Activated CD4-positive, alpha-beta T cell treated with anti-CD3 and anti-CD28 coated beads, Interleukin-2, amount 10 ng/mL, durations not matched to agents 24 days and 14 days (primary cell): ENCODE measurements at regions of chr22 and their contacts with region 1.

Region 1: DNA sequence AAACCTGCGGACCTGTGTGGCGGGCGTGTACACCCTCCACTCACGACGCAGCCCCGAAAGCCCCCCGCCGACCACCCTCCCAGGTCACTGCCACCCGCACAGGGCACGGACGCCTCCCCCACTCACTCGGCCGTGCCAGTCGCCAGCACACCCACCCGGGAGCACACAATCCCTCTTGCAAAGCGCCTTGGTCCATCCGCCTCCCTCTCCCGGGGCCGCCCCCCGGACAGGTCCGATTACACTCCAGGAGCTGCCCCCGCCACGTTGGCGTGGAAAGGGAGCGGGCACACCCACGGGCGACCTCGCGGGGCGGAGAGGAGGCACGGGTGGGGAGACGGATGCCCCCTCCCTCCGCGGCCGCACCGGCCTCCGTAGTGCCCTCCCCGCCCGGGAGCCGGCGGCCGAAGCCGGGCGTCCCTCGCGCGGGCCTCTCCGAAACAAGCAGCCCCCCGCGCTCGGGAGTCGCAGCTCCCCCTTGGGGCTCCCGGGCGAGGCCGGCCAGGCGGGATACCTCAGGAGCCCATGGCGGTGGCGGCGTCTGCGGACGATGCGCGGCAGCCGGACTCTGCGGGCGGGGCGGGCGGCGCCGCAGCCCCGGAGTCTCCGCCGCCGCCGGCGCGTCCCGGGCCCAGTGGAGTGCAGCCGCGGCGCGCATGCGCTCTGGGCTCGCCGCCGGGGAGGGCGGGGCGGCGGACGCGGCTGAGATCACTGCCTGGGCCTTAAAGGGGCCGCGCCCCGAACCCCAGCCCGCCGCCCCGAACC is at the start of gene TMEM184B:
- DNase-seq: peak; percentile 96
- H3K4me3 Mint-ChIP-seq: peak within 1 kb of the TSS; percentile 90
- H3K27ac Mint-ChIP-seq: peak within 1 kb of the TSS; percentile 89
- H3K4me1 Mint-ChIP-seq: peaks cover 34% of the 10 kb centered on the region
- H3K27me3 Mint-ChIP-seq: peaks cover 5% of the 10 kb centered on the region
- total RNA-seq, gene TMEM184B: 31.9 and 33.1 TPM in 2 replicates

Region 2: GRCh38 chr22:38317122-38317994 is 44.8 kb after region 1 on chr22 and contains the start of gene CSNK1E:
- intact Hi-C with region 1: loop called (anchors 1 kb)
- DNase-seq: peak; percentile 94
- H3K4me3 Mint-ChIP-seq: peak within 1 kb of the TSS; percentile 92
- H3K27ac Mint-ChIP-seq: peak within 1 kb of the TSS; percentile 92
- H3K4me1 Mint-ChIP-seq: peaks cover 41% of the 10 kb centered on the region
- H3K27me3 Mint-ChIP-seq: no peaks in the 10 kb centered on the region
- total RNA-seq, gene CSNK1E: 157 and 159 TPM in 2 replicates

Region 3: GRCh38 chr22:38353142-38353629 is 80.6 kb after region 1 on chr22:
- intact Hi-C with region 1: loop called (anchors 10 kb)
- DNase-seq: peak; percentile 93
- H3K4me3 Mint-ChIP-seq: no peak overlapping the region
- H3K27ac Mint-ChIP-seq: no peak overlapping the region
- H3K4me1 Mint-ChIP-seq: no peaks in the 10 kb centered on the region
- H3K27me3 Mint-ChIP-seq: no peaks in the 10 kb centered on the region

Region 4: GRCh38 chr22:38422611-38423511 is 150.3 kb after region 1 on chr22:
- intact Hi-C with region 1: no loop called
- DNase-seq: no peak
- H3K4me3 Mint-ChIP-seq: no peak overlapping the region
- H3K27ac Mint-ChIP-seq: no peak overlapping the region
- H3K4me1 Mint-ChIP-seq: no peaks in the 10 kb centered on the region
- H3K27me3 Mint-ChIP-seq: no peaks in the 10 kb centered on the region